Activated CD4-positive, alpha-beta T cell treated with anti-CD3 and anti-CD28 coated beads, Interleukin-2, amount 10 ng/mL, durations not matched to agents 24 days and 14 days (primary cell): ENCODE measurements at regions of chrX and their contacts with region 1.

Region 1: DNA sequence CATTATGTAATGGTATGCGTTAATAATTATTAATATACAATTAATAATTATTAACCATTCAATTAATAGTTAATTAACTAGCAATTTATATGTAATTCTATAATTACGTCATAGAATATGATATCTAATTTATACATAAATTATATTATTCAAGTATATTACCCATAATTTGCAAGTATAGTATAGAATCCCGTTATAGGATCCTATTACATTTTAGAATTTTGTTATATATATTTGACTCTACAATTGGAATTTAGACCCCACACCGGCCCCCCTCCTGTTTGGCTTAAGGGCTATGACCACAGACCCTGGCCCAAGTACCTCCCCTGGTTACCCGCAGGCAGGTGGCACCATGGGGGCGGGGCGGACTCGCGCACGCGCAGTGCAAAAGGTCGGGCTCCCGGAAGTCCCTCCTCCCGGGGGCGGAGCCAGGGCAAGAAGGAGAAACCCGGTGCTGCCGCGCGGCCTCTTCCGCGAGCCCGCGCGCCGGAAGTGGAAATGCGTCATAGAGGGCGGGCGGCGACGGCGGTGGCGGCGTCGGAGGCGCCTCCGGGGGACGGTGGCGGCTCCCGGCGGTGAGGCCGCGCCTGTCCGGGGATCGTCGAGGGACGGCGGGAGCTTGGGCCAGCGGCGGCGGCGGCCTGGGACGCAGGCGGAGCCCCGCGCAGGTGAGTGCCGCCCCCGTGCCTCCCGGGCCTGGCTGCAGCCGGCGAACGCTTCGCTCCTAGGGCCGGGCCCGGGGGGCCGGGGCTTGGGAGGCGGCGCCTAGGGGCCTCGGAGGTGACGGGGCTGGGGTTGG is at the start of gene AKAP17A:
- DNase-seq: peak; percentile 100
- H3K4me3 Mint-ChIP-seq: peak within 1 kb of the TSS; percentile 97
- H3K27ac Mint-ChIP-seq: peak within 1 kb of the TSS; percentile 93
- H3K4me1 Mint-ChIP-seq: peaks cover 22% of the 10 kb centered on the region
- H3K27me3 Mint-ChIP-seq: no peaks in the 10 kb centered on the region
- total RNA-seq, gene AKAP17A: 59.6 and 62.0 TPM in 2 replicates

Region 2: DNA sequence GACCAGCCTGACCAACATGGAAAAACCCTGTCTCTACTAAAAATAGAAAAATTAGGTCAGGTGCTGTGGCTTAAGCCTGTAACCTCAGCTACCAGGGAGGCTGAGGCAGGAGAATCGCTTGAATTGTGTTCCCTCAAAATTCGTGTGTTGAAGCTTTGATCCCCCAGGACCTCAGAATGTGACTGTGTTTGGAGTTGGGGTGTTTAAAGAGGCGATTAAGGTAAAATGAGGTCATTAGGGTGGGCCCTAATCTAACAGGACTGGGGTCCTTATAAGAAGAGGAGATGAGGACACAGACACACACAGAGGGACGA is 223.0 kb before region 1 on chrX:
- intact Hi-C with region 1: no loop called
- DNase-seq: no peak
- H3K4me3 Mint-ChIP-seq: no peak overlapping the region
- H3K27ac Mint-ChIP-seq: no peak overlapping the region
- H3K4me1 Mint-ChIP-seq: peaks cover 4% of the 10 kb centered on the region
- H3K27me3 Mint-ChIP-seq: no peaks in the 10 kb centered on the region

Region 3: GRCh38 chrX:1391707-1392375 is 199.5 kb before region 1 on chrX and contains the start of gene SLC25A6:
- intact Hi-C with region 1: loop called (anchors 2 kb)
- DNase-seq: peak; percentile 100
- H3K4me3 Mint-ChIP-seq: peak within 1 kb of the TSS; percentile 97
- H3K27ac Mint-ChIP-seq: peak within 1 kb of the TSS; percentile 98
- H3K4me1 Mint-ChIP-seq: peaks cover 36% of the 10 kb centered on the region
- H3K27me3 Mint-ChIP-seq: no peaks in the 10 kb centered on the region
- total RNA-seq, gene SLC25A6: 302 and 306 TPM in 2 replicates

Region 4: GRCh38 chrX:1580735-1581531 is 10.4 kb before region 1 on chrX:
- intact Hi-C with region 1: loop called (anchors 1 kb)
- DNase-seq: peak; percentile 94
- H3K4me3 Mint-ChIP-seq: no peak overlapping the region
- H3K27ac Mint-ChIP-seq: no peak overlapping the region
- H3K4me1 Mint-ChIP-seq: peaks cover 17% of the 10 kb centered on the region
- H3K27me3 Mint-ChIP-seq: no peaks in the 10 kb centered on the region

Region 5: GRCh38 chrX:1824855-1825254 is 233.6 kb after region 1 on chrX:
- intact Hi-C with region 1: no loop called
- DNase-seq: no peak
- H3K4me3 Mint-ChIP-seq: no peak overlapping the region
- H3K27ac Mint-ChIP-seq: no peak overlapping the region
- H3K4me1 Mint-ChIP-seq: no peaks in the 10 kb centered on the region
- H3K27me3 Mint-ChIP-seq: no peaks in the 10 kb centered on the region

Region 6: GRCh38 chrX:2589186-2590030 is 998.1 kb after region 1 on chrX:
- intact Hi-C with region 1: loop called (anchors 5 kb)
- DNase-seq: no peak
- H3K4me3 Mint-ChIP-seq: no peak overlapping the region
- H3K27ac Mint-ChIP-seq: no peak overlapping the region
- H3K4me1 Mint-ChIP-seq: peaks cover 13% of the 10 kb centered on the region
- H3K27me3 Mint-ChIP-seq: peaks cover 12% of the 10 kb centered on the region